Activated naive CD4-positive, alpha-beta T cell treated with anti-CD3 and anti-CD28 coated beads for 36 hours (primary cell): ENCODE measurements at regions of chr12 and their contacts with region 1.

Region 1: DNA sequence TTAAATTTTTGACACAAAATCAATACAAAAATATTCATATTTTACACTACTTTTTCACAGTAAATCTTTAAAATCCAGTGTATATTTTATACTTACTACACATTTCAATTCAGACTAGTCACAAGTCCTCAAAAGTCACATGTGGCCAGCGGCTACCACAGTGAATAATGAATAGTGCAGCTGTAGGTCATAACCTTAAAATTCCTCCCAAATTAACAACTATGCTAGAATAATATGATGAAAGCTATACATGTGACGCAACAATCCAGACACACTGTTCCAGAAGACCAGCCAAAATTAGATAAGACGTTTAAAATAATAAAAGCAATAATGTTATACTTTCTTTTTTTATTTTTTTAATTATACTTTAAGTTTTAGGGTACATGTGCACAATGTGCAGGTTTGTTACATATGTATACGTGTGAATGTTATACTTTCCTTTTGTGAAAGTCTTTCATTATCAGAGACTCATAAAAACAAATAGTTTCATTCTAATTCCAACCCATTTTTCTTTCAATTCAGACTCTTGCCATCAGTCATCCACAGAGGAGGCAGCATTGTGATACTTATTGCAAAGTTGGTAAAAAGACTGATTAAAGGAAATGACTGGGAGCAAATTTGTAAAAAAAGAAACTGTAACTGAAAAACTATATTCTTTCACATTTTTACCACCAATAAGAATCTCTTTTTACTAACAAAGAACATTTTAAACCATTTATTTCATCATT is 67.0 kb downstream of the C2CD5 start:
- DNase-seq: no peak
- H3K4me3 Mint-ChIP-seq: no peak overlapping the region
- H3K27ac Mint-ChIP-seq: peak overlapping the region; percentile 32
- H3K4me1 Mint-ChIP-seq: peaks cover 24% of the 10 kb centered on the region
- H3K27me3 Mint-ChIP-seq: no peaks in the 10 kb centered on the region

Region 2: DNA sequence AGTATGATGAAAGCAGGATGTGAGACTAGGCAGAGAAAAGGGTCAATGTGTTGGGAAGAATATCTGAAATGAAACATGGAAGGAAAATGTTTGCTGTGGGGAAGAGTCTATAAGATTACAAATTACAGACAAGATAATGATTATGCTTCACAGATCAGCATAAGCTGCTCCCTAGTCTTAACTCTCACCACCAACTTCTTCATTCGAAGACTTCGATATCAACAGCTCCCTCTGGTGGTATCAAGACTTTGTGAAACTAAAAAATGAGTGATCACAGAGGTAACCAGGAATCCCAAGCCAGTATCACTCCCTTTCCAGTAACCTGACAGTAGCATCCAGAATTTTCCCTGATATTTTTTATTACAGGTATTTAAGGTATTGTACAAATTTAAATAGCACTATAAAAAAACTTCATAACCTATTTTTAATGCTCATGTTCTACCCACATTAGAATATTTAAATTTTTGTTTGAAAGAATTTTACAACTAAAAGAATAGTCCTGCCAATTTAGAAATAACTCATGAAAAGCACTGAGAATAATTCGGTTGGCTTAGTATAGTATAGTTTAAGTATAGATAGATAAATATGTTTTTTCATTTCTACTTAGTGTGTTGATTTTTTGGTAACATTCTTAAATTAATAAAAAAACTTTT is 17.4 kb before region 1 on chr12:
- CTCF ChIA-PET with region 1: interaction called, 43 read pairs
- intact Hi-C with region 1: no loop called
- DNase-seq: no peak
- H3K4me3 Mint-ChIP-seq: no peak overlapping the region
- H3K27ac Mint-ChIP-seq: no peak overlapping the region
- H3K4me1 Mint-ChIP-seq: peaks cover 3% of the 10 kb centered on the region
- H3K27me3 Mint-ChIP-seq: no peaks in the 10 kb centered on the region

Region 3: DNA sequence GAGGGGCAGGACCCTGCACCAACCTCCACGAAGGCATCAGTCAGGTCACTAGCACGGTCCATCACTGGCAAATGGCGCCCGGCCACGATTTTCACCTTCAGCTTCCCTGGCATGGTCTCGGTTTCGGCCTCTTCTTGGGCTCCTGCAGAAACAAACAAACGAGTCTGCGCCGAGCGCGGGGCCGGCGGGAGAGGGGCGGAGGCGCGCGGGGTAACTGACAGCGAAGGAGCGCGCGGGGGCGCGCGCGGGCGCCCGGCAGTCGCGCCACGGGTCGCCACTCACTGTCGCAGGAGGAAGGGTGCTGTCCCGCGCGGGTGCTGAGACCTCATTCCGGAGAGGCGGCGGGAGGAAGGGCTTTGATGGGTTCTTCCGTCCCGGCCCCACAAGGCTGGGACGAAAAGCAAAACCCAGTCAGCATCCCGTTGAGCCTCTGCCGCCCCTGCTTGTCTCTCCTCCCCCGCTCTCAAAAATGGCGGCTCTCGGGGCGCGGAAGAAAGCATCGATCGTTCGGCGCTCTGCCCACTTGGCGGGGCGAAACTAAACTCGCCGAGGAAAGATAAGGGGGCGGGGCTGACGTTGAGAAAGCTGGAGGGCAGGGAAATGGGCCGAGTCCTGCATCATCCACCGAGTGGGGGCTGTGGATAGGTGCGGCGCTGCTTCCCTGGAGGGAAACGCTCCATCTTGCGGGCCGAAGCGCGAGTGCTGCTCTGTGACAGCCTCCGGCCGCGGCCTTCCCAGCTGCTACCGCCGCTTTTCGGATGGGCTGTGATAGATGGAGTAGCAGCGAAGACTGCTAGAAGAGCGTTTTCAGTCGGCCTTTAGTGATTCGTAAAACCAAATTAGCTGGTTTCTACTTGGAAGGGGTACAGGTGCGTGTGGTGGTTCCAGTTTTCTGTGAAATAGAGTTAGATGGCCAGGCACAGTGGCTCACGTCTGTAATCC is 67.0 kb after region 1 on chr12 and contains the start of gene C2CD5:
- CTCF ChIA-PET with region 1: no interaction called
- intact Hi-C with region 1: no loop called
- DNase-seq: peak; percentile 96
- H3K4me3 Mint-ChIP-seq: peak within 1 kb of the TSS; percentile 91
- H3K27ac Mint-ChIP-seq: peak within 1 kb of the TSS; percentile 91
- H3K4me1 Mint-ChIP-seq: peaks cover 40% of the 10 kb centered on the region
- H3K27me3 Mint-ChIP-seq: no peaks in the 10 kb centered on the region
- total RNA-seq, gene C2CD5: 34.5 to 39.9 TPM